ENCODE measurements at regions of chr13 and their contacts with region 1.

Region 1: DNA sequence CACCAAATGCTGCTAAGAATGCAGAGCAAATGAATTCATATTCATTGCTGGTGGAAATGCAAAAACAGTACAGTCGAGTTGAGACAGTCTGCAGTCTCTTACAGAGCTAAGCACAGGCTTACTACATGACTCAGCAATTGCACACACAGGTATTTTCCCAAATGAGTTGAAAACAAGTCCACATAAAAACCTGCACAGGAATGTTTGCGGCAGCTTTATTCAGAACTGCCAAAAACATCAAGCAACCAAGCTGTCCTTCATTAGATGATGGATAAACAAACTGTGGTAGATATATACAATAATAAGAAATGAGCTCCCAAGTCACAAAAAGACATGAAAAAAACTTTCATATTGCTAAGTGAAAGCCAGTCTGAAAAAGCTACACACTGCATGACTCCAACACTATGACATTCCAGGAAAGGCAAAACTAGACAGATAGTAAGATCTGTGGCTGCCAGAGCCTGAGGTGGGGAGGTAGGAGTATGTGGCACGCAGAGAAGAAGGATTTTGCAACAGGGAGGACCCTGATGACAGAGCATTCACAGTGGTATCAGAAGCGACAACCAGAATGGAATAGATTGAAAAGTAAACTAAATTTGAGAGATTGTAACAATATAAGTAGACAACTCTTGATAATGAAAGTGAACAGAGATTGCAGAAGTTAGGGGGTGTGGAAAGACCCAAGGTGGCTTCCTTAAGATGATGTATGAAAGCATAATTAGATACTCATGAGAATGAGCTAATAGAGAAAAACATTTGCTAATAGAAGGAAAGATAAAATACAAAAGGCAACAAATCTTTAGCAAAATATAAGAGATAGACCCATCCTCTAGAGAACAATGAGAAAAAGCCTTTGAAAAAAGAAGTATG is 52.7 kb downstream of the TSC22D1 start:
- DNase-seq: no peak
- H3K4me3 Mint-ChIP-seq: no peak overlapping the region
- H3K27ac Mint-ChIP-seq: no peak overlapping the region
- H3K4me1 Mint-ChIP-seq: no peaks in the 10 kb centered on the region
- H3K27me3 Mint-ChIP-seq: peaks cover 10% of the 10 kb centered on the region

Region 2: GRCh38 chr13:44470638-44471562 is 52.5 kb before region 1 on chr13:
- intact Hi-C with region 1: loop called (anchors 1 kb)
- DNase-seq: no peak
- H3K4me3 Mint-ChIP-seq: no peak overlapping the region
- H3K27ac Mint-ChIP-seq: no peak overlapping the region
- H3K4me1 Mint-ChIP-seq: no peaks in the 10 kb centered on the region
- H3K27me3 Mint-ChIP-seq: peaks cover 8% of the 10 kb centered on the region

Measured in activated T-helper 1 cell treated with anti-CD3 and anti-CD28 coated beads, Interleukin-12 subunit alpha, Interleukin-12 subunit beta, Interleukin-2, Interleukin-4 antibody, amounts not matched to agents 30 ng/mL and 10 ng/mL and 1 ng/mL, durations not matched to agents 14 hours and 24 hours and 36 hours (primary cell).